ENCODE measurements at regions of chr6 and their contacts with region 1.

Region 1: GRCh38 chr6:26216356-26216885 is 129.2 kb downstream of the HFE start:
- DNase-seq: peak; percentile 61 to 96 (median 73)
- ATAC-seq: peak; percentile 79
- H3K4me3 ChIP-seq: peak overlapping the region; percentile 71 to 74
- H3K4me3 Mint-ChIP-seq: no peak overlapping the region
- H3K27ac ChIP-seq: peak overlapping the region; percentile 82 to 91
- H3K27ac Mint-ChIP-seq: no peak overlapping the region
- H3K4me1 ChIP-seq: peaks cover 19% of the 10 kb centered on the region
- H3K4me1 Mint-ChIP-seq: peaks cover 14% of the 10 kb centered on the region
- H3K27me3 ChIP-seq: no peaks in the 10 kb centered on the region
- H3K27me3 Mint-ChIP-seq: no peaks in the 10 kb centered on the region
- CTCF ChIP-seq: no peak

Region 2: DNA sequence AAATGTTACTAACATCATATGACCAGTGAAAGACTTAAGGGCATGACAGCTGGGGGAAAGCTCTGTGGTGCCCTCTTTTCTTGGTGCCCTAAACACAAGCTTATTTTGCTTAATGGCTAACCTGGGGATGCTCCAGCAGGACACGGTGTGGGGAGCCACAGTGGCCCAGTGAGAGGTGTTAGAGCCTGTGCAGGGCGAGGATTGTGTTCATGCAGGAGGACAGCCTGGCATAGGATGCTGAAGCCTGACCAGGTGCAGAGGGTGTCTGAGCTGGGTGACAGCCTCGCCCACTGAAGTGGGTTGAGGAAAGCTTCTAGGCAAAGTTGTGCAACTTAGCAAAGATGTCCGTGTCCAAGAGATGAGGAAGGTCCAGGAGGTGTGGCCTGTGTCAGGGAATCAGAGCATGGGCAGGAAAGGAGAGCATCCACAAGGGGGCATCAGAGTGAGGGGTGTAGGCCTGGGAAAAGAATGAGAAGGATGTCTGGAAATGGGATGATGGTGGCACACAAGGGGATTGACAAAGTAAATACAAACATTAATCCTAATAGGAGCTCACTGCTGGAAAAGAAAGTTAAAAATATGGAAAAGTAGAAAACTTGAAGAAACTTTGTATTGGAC is 428.0 kb before region 1 on chr6:
- CTCF ChIA-PET with region 1: no interaction called
- POLR2A ChIA-PET with region 1: no interaction called
- intact Hi-C with region 1: no loop called
- DNase-seq: peak in 7 of 9 experiments; percentile 11 to 63 (median 41)
- ATAC-seq: peak; percentile 52
- H3K4me3 ChIP-seq: no peak overlapping the region
- H3K4me3 Mint-ChIP-seq: no peak overlapping the region
- H3K27ac ChIP-seq: no peak overlapping the region
- H3K27ac Mint-ChIP-seq: no peak overlapping the region
- H3K4me1 ChIP-seq: no peaks in the 10 kb centered on the region
- H3K4me1 Mint-ChIP-seq: no peaks in the 10 kb centered on the region
- H3K27me3 ChIP-seq: no peaks in the 10 kb centered on the region
- H3K27me3 Mint-ChIP-seq: peaks cover 3% of the 10 kb centered on the region
- CTCF ChIP-seq: peak; percentile 37

Region 3: GRCh38 chr6:26103770-26104456 is 112.5 kb before region 1 on chr6:
- CTCF ChIA-PET with region 1: interaction called, 4 read pairs
- POLR2A ChIA-PET with region 1: interaction called, 11 read pairs
- intact Hi-C with region 1: loop called in 1 of 2 experiments (anchors 5 kb)
- DNase-seq: peak; percentile 84 to 97 (median 89)
- ATAC-seq: peak; percentile 91
- H3K4me3 ChIP-seq: peak overlapping the region; percentile 52 to 58
- H3K4me3 Mint-ChIP-seq: peak overlapping the region; percentile 85
- H3K27ac ChIP-seq: peak overlapping the region; percentile 85 to 92
- H3K27ac Mint-ChIP-seq: peak overlapping the region; percentile 98
- H3K4me1 ChIP-seq: peaks cover 7% of the 10 kb centered on the region
- H3K4me1 Mint-ChIP-seq: peaks cover 17% of the 10 kb centered on the region
- H3K27me3 ChIP-seq: no peaks in the 10 kb centered on the region
- H3K27me3 Mint-ChIP-seq: no peaks in the 10 kb centered on the region
- CTCF ChIP-seq: peak; percentile 67

Region 4: DNA sequence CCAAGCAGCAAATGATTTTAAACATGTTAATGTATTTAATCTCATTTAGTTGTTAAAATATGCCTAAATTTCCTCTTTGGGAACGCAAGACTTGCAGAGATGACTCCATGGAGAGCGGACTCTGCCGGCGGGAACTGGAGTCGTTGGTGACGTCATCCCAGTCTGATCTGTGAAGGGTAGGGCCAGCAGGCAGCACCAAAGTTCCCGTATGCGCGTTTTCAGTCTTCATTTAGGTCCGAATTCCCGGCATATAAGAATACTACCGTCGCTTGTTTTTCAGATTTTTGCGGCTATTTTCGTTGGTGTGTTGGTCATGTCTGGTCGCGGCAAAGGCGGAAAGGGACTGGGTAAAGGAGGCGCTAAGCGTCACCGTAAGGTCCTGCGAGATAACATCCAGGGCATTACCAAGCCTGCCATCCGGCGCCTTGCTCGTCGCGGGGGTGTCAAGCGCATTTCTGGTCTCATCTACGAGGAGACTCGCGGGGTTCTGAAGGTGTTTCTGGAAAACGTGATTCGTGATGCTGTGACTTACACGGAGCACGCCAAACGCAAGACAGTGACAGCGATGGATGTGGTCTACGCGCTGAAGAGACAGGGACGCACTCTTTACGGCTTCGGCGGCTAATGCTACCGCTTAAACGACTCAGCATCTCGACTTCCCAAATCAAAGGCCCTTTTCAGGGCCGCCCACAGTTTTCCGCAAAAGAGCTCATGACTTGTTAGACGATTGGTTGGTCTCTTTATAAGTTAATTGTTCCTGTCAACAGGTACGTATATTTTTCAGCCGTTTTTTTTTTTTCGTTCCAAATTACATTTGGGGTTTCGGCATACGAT is 11.9 kb before region 1 on chr6:
- CTCF ChIA-PET with region 1: interaction called, 45 read pairs
- POLR2A ChIA-PET with region 1: interaction called, 640 read pairs
- intact Hi-C with region 1: loop called (anchors 1 kb)
- DNase-seq: peak; percentile 75 to 98 (median 84)
- ATAC-seq: peak; percentile 74
- H3K4me3 ChIP-seq: peak overlapping the region; percentile 54 to 70
- H3K4me3 Mint-ChIP-seq: no peak overlapping the region
- H3K27ac ChIP-seq: peak overlapping the region; percentile 91
- H3K27ac Mint-ChIP-seq: no peak overlapping the region
- H3K4me1 ChIP-seq: peaks cover 31% of the 10 kb centered on the region
- H3K4me1 Mint-ChIP-seq: peaks cover 23% of the 10 kb centered on the region
- H3K27me3 ChIP-seq: no peaks in the 10 kb centered on the region
- H3K27me3 Mint-ChIP-seq: no peaks in the 10 kb centered on the region
- CTCF ChIP-seq: no peak

Region 5: GRCh38 chr6:26270903-26271667 is 54.7 kb after region 1 on chr6:
- CTCF ChIA-PET with region 1: interaction called, 3 read pairs
- POLR2A ChIA-PET with region 1: interaction called, 229 read pairs
- intact Hi-C with region 1: loop called (anchors 1 to 2 kb)
- DNase-seq: peak; percentile 68 to 91 (median 80)
- ATAC-seq: peak; percentile 22
- H3K4me3 ChIP-seq: peak overlapping the region; percentile 65 to 67
- H3K4me3 Mint-ChIP-seq: no peak overlapping the region
- H3K27ac ChIP-seq: peak overlapping the region; percentile 73 to 92
- H3K27ac Mint-ChIP-seq: peak overlapping the region; percentile 73
- H3K4me1 ChIP-seq: peaks cover 22% of the 10 kb centered on the region
- H3K4me1 Mint-ChIP-seq: peaks cover 13% of the 10 kb centered on the region
- H3K27me3 ChIP-seq: no peaks in the 10 kb centered on the region
- H3K27me3 Mint-ChIP-seq: no peaks in the 10 kb centered on the region
- CTCF ChIP-seq: no peak

Region 6: DNA sequence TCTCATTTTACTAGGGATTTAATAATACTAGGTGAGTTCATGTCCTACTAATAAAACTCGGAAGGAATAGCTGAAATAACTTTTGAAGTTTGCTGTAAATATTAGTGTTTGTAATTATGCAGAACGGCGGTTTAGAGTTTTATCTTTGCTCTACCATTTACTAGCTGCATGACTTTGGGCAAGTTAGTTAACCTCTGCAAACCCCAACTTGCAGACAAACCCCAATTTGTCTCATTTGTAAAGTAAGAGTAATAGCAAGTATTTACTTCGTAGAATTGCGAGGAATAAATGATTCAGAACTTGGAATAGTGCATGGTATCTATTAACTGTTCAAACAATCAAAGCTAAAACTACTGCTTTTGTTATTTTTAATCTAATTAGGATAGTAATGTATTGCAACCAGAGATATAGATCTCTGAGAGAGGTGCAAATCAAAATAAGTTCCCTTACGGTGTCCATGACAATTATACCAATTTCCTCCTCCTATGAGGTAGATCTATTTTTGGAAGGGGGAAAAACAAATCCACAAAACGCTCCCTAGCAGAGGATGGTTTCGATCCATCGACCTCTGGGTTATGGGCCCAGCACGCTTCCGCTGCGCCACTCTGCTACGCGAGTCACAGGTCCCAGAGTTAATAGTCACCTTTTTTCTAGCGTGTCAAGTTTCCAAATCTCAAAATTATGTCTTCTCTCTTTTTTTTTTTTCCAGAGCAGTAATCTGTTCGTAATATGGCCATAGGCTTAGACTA is 113.5 kb after region 1 on chr6:
- CTCF ChIA-PET with region 1: no interaction called
- POLR2A ChIA-PET with region 1: interaction called, 14 read pairs
- intact Hi-C with region 1: no loop called
- DNase-seq: peak in 7 of 9 experiments; percentile 35 to 81 (median 60)
- ATAC-seq: peak; percentile 27
- H3K4me3 ChIP-seq: no peak overlapping the region
- H3K4me3 Mint-ChIP-seq: peak overlapping the region; percentile 59
- H3K27ac ChIP-seq: no peak overlapping the region
- H3K27ac Mint-ChIP-seq: peak overlapping the region; percentile 85
- H3K4me1 ChIP-seq: peaks cover 18% of the 10 kb centered on the region
- H3K4me1 Mint-ChIP-seq: peaks cover 53% of the 10 kb centered on the region
- H3K27me3 ChIP-seq: peaks cover 8 to 11% of the 10 kb centered on the region in 2 experiments
- H3K27me3 Mint-ChIP-seq: peaks cover 27% of the 10 kb centered on the region
- CTCF ChIP-seq: no peak

Region 7: DNA sequence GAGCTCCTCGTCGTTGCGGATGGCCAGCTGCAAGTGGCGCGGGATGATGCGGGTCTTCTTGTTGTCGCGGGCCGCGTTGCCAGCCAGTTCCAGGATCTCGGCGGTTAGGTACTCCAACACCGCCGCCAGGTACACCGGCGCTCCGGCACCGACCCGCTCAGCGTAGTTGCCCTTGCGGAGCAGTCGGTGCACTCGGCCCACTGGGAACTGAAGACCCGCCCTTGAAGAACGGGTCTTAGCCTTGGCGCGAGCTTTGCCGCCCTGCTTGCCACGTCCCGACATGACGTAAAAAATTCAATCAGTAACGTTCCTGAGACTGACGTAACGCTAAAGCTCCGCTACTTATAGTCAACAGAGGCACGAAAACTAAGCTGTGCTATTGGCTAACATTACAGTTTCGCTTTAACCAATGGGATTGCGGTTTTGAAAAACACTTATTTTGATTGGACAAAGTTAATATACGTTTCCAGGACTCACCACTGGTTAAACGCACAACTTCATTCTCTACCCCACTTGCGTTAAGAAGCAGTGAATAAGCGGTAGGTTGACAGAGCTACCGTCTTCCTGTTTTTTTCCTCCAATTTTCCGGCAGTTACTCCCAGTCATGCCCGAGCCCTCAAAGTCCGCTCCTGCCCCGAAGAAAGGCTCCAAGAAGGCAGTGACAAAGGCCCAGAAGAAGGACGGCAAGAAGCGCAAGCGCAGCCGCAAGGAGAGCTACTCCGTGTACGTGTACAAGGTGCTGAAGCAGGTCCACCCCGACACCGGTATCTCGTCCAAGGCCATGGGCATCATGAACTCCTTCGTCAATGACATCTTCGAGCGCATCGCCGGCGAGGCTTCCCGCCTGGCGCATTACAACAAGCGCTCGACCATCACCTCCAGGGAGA is 1621.9 kb after region 1 on chr6:
- CTCF ChIA-PET with region 1: no interaction called
- POLR2A ChIA-PET with region 1: interaction called, 28 read pairs
- intact Hi-C with region 1: no loop called
- DNase-seq: peak; percentile 61 to 98 (median 74)
- ATAC-seq: peak; percentile 70
- H3K4me3 ChIP-seq: peak overlapping the region; percentile 64 to 76
- H3K4me3 Mint-ChIP-seq: no peak overlapping the region
- H3K27ac ChIP-seq: peak overlapping the region; percentile 91 to 98
- H3K27ac Mint-ChIP-seq: no peak overlapping the region
- H3K4me1 ChIP-seq: peaks cover 35% of the 10 kb centered on the region
- H3K4me1 Mint-ChIP-seq: peaks cover 21% of the 10 kb centered on the region
- H3K27me3 ChIP-seq: peaks cover 0 to 4% of the 10 kb centered on the region in 2 experiments
- H3K27me3 Mint-ChIP-seq: peaks cover 7% of the 10 kb centered on the region
- CTCF ChIP-seq: no peak

Measured in CD8-positive, alpha-beta T cell (primary cell).